ENCODE measurements at regions of chr3 and their contacts with region 1.

Region 1: GRCh38 chr3:99753268-99753975 is 64.2 kb upstream of the CMSS1 start:
- DNase-seq: peak; percentile 48 to 66
- H3K4me3 ChIP-seq: no peak overlapping the region
- H3K4me1 ChIP-seq: no peaks in the 10 kb centered on the region; the same call in 1 of the 2 replicates
- H3K27me3 ChIP-seq: peaks cover 6% of the 10 kb centered on the region

Region 2: DNA sequence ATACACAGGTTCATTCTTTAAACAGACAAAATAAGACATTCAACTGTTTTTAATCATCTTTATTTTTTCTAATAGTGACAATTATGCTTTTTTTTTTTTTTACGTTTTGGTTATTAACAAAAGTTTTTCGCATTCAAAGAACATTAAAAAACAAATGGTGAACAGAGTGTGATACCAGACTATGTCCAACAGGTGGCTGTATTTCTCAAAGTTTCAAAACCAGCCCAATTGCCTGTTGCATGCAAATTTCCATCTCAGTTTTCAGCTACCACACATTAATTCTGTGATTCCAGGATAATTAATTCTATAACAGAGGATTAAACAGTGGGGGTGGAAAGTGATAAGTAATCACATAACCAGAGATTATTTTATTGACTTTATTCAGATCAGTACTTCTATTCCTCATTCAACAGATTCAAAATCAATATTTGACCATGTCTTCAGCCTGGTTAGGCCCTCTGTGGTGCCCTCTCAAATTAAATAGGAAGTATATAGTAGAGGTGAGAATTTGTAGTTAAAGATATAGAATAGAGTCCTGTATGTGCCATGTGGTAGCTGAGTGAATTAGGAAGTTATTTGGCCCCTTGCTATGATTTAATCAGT is 729.7 kb before region 1 on chr3:
- in situ Hi-C with region 1: loop called (anchors 25 kb)
- DNase-seq: peak in 1 of 2 experiments; percentile 21
- H3K4me3 ChIP-seq: no peak overlapping the region
- H3K4me1 ChIP-seq: no peaks in the 10 kb centered on the region
- H3K27me3 ChIP-seq: no peaks in the 10 kb centered on the region

Region 3: GRCh38 chr3:99499235-99500158 is 253.9 kb before region 1 on chr3:
- in situ Hi-C with region 1: loop called (anchors 10 kb)
- DNase-seq: peak; percentile 23 to 49
- H3K4me3 ChIP-seq: no peak overlapping the region
- H3K4me1 ChIP-seq: no peaks in the 10 kb centered on the region
- H3K27me3 ChIP-seq: no peaks in the 10 kb centered on the region

Measured in HAP-1 (cell line).